Calu3 (cell line): ENCODE measurements at regions of chr11 and their contacts with region 1.

Region 1: DNA sequence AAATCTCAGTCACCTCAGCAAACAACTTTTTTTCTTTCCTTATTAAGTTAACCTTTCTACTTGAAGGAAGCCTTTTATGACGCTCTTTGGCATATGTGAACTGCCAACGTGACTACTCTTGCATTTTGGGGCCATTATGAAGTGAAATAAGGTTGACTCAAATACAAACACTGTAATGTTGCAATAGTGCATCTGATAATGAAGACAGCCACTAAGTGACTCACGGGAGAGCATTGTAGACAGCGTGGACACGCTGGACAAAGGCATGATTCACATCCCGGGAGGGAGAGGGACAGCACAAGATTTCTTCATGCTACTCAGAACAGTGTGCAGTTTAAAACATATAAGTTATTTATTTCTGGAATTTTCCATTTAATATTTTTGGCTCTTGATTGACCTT is 560.8 kb downstream of the ETS1 start:
- DNase-seq: peak; percentile 42
- H3K4me3 Mint-ChIP-seq: no peak overlapping the region
- H3K27ac Mint-ChIP-seq: peak overlapping the region; percentile 71
- H3K4me1 Mint-ChIP-seq: peaks cover 20% of the 10 kb centered on the region
- H3K27me3 Mint-ChIP-seq: no peaks in the 10 kb centered on the region
- CTCF ChIP-seq: no peak

Region 2: GRCh38 chr11:128157423-128158298 is 131.1 kb after region 1 on chr11:
- CTCF ChIA-PET with region 1: no interaction called
- intact Hi-C with region 1: loop called (anchors 2 kb)
- DNase-seq: peak; percentile 57
- H3K4me3 Mint-ChIP-seq: no peak overlapping the region
- H3K27ac Mint-ChIP-seq: no peak overlapping the region
- H3K4me1 Mint-ChIP-seq: no peaks in the 10 kb centered on the region
- H3K27me3 Mint-ChIP-seq: no peaks in the 10 kb centered on the region
- CTCF ChIP-seq: peak; percentile 79

Region 3: GRCh38 chr11:128164080-128164741 is 137.6 kb after region 1 on chr11:
- CTCF ChIA-PET with region 1: no interaction called
- intact Hi-C with region 1: loop called (anchors 2 kb)
- DNase-seq: no peak
- H3K4me3 Mint-ChIP-seq: no peak overlapping the region
- H3K27ac Mint-ChIP-seq: peak overlapping the region; percentile 92
- H3K4me1 Mint-ChIP-seq: peaks cover 26% of the 10 kb centered on the region
- H3K27me3 Mint-ChIP-seq: no peaks in the 10 kb centered on the region
- CTCF ChIP-seq: no peak

Region 4: DNA sequence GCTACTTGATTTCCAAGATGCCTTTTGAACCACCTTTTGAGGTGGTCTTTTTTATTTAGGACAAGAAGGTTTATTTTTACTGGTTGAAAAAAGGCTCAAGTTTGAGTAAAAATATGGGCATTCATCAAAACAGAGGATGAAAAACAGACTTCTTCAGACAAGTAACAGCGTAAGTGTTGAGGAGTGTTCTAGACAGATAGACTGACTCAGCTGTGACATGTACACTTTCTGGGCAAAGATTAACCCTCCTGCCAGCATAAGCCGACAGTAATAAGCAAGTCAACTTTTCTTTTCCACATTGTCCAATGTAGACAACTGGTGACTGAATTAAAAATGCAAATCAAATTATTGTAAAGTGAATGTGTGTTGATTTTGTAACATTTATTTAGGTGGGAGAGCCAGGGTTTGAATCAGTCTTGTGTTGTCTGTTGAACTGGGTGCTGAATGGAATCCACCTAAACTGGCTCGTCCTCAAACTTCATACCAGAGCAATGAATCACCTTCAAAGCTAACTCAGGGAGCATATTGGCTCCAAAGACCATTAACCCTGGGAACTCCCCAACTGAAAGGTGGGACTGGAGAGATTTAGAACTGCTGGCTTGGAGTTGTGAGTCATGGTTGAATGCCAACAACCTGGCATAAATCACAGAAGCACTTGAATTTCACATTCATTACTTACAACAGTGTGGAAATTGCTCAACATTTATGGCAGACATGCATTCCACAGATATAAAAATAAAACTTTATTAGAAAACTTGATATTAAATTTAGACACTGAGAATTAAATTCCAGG is 183.7 kb after region 1 on chr11:
- CTCF ChIA-PET with region 1: no interaction called
- intact Hi-C with region 1: no loop called
- DNase-seq: peak; percentile 76
- H3K4me3 Mint-ChIP-seq: no peak overlapping the region
- H3K27ac Mint-ChIP-seq: peak overlapping the region; percentile 72
- H3K4me1 Mint-ChIP-seq: peaks cover 33% of the 10 kb centered on the region
- H3K27me3 Mint-ChIP-seq: no peaks in the 10 kb centered on the region
- CTCF ChIP-seq: no peak